ENCODE measurements at regions of chr15 and their contacts with region 1.

Region 1: GRCh38 chr15:77543159-77543882 is 89.4 kb downstream of the LINGO1 start:
- DNase-seq: peak; percentile 90
- CTCF ChIP-seq: peak; percentile 92

Region 2: GRCh38 chr15:77024271-77025082 is 518.8 kb before region 1 on chr15:
- CTCF ChIA-PET with region 1: interaction called, 22 read pairs
- POLR2A ChIA-PET with region 1: no interaction called
- DNase-seq: peak; percentile 84
- CTCF ChIP-seq: peak; percentile 93

Region 3: GRCh38 chr15:77059786-77060361 is 483.4 kb before region 1 on chr15:
- CTCF ChIA-PET with region 1: interaction called, 10 read pairs
- POLR2A ChIA-PET with region 1: no interaction called
- DNase-seq: no peak
- CTCF ChIP-seq: no peak

Region 4: GRCh38 chr15:77112838-77113504 is 430.4 kb before region 1 on chr15:
- CTCF ChIA-PET with region 1: interaction called, 143 read pairs
- POLR2A ChIA-PET with region 1: no interaction called
- DNase-seq: no peak
- CTCF ChIP-seq: no peak

Region 5: DNA sequence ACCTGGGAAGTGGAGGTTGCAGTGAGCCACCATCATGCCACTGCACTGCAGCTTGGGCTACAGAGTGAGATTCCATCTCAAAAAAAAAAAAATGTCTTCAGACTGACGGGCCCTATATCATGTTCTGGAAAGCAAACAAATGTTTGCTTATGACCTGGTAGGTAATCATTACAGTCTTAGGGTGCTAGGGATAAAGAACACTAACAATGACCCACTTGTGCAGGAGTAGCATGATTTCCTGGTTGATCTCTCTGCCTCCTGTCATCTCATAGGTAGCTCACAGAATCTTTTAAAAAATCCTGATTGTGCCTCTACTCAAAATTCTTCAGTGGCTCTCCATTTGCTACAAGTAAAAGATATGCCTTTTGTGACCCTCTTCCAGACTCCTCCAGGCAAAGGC is 398.0 kb before region 1 on chr15:
- CTCF ChIA-PET with region 1: interaction called, 22 read pairs
- POLR2A ChIA-PET with region 1: no interaction called
- DNase-seq: no peak
- CTCF ChIP-seq: no peak

Region 6: DNA sequence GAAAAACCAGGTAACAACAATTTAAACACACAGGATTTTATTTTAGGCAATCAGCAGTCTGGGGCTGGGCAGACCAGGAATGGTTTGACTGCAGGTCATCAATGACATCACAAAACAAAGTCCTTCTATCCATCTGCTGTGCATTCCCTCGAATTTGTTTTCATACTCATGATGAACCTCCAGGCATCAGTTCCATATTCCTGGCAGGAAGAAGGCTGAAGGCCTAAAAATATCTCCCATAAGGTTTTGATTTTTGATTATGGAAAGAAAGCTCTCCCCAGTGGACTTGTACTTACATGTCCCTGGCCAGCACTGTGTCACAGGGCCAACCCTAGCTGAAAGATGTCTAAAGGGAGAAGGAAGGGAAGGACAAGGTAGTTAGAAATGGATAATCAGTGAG is 230.8 kb before region 1 on chr15:
- CTCF ChIA-PET with region 1: no interaction called
- POLR2A ChIA-PET with region 1: no interaction called
- DNase-seq: no peak
- CTCF ChIP-seq: no peak

Region 7: GRCh38 chr15:77496710-77497103 is 46.6 kb before region 1 on chr15:
- CTCF ChIA-PET with region 1: interaction called, 48 read pairs
- POLR2A ChIA-PET with region 1: no interaction called
- DNase-seq: peak; percentile 81
- CTCF ChIP-seq: peak; percentile 90

Region 8: GRCh38 chr15:77526791-77527778 is 16.2 kb before region 1 on chr15:
- CTCF ChIA-PET with region 1: interaction called, 28 read pairs
- POLR2A ChIA-PET with region 1: no interaction called
- DNase-seq: no peak
- CTCF ChIP-seq: no peak

Region 9: DNA sequence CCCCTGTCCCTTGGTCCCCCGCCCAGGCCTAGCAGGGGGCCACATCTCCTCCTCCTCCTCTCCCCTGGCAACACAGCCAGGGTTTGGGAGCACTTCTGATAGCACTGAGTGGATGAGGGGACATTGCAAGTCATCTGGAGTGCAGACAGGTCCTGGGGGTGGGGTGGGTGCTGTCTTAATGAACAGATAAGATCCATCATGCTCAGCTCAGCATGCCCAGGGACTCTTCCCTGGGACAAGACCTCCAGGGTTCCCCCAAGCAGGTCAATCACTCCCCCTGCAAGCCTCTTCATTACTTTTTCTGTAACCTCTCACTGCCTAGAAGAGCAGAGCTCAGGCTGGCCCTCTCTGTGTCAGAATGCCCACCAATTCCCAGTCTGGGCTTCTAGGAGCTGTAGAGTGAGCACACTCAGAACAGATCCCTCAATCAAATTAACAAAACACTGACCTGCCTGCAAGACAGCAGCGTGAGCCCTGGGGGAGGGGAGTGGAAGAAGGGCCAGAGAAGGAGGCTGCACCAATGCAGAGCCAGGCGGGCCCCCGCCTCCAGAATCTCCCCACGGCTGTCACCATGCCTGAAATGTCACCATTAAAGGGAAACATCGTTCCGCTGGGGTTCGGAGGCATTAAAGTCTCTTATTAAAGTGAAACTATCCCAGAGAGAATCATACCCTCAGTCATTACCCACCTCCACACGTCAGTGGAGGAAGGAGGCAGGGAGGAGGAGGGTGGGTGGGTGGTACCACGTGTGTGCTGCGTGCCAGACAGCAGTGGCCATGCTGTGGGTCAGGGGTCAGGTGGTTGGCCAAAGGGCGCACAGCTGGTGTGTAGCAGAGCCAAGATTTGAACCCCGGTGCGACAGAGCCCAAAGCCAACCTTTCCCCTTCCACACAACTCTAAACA is 204.1 kb after region 1 on chr15:
- CTCF ChIA-PET with region 1: no interaction called
- POLR2A ChIA-PET with region 1: no interaction called
- DNase-seq: no peak
- CTCF ChIP-seq: no peak

Measured in GM10248 (cell line).